ENCODE measurements at regions of chr1 and their contacts with region 1.

Region 1: DNA sequence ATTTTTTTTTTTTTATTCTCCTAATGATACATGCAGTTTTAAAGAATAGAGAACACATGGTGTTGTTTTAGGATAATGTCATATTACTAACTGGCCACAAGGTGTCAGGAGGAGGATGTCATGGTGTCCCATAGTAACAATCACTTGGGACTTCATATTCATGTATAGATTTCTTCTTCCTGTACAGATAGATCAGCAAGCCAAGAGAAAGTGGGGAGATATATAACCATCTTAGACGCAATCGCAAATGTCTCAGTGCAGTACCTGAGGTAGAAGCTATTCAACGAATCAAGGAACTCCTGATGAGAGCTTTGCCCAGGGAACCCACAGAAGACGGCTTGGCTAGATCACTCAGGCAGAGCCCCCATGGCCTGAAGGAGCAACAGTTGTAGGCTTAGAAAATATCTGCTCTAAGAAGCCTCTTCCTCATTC is 12.3 kb downstream of the OR2T11 start:
- DNase-seq: no peak
- H3K4me3 ChIP-seq: no peak overlapping the region
- H3K27ac ChIP-seq: no peak overlapping the region
- H3K4me1 ChIP-seq: no peaks in the 10 kb centered on the region
- H3K27me3 ChIP-seq: no peaks in the 10 kb centered on the region; the same call in 1 of the 2 replicates
- CTCF ChIP-seq: peak; percentile 70

Region 2: GRCh38 chr1:247448107-247448791 is 1174.3 kb before region 1 on chr1:
- CTCF ChIA-PET with region 1: no interaction called
- POLR2A ChIA-PET with region 1: no interaction called
- intact Hi-C with region 1: no loop called
- DNase-seq: peak in 1 of 2 experiments; percentile 47
- H3K4me3 ChIP-seq: peak overlapping the region; percentile 54; the same call in 1 of the 2 replicates
- H3K27ac ChIP-seq: no peak overlapping the region
- H3K4me1 ChIP-seq: no peaks in the 10 kb centered on the region
- H3K27me3 ChIP-seq: peaks cover 40% of the 10 kb centered on the region
- CTCF ChIP-seq: no peak

Region 3: DNA sequence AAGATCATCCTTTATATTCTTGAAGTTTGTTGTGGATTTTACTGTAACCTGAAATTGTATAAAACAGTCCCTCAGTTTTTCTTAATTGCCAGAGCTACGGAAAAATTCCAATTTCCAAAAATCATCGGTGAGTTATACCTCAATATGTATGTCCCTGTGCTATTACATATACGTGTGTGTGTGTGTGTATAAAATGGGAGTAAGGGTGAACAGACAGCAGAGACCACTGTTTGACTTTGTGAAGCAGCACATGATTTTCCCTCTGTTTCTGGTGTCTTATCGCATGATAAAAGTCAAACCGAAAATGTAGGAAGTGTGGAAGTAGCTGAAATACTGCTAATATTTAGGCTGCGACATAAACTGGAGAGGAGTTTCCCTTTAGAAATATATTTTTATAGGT is 218.6 kb before region 1 on chr1:
- CTCF ChIA-PET with region 1: no interaction called
- POLR2A ChIA-PET with region 1: no interaction called
- intact Hi-C with region 1: no loop called
- DNase-seq: no peak
- H3K4me3 ChIP-seq: no peak overlapping the region
- H3K27ac ChIP-seq: no peak overlapping the region
- H3K4me1 ChIP-seq: no peaks in the 10 kb centered on the region
- H3K27me3 ChIP-seq: no peaks in the 10 kb centered on the region
- CTCF ChIP-seq: no peak

Region 4: GRCh38 chr1:248596615-248597014 is 26.0 kb before region 1 on chr1:
- CTCF ChIA-PET with region 1: no interaction called
- POLR2A ChIA-PET with region 1: no interaction called
- intact Hi-C with region 1: loop called (anchors 1 kb)
- DNase-seq: no peak
- H3K4me3 ChIP-seq: no peak overlapping the region
- H3K27ac ChIP-seq: no peak overlapping the region
- H3K4me1 ChIP-seq: no peaks in the 10 kb centered on the region
- H3K27me3 ChIP-seq: no peaks in the 10 kb centered on the region
- CTCF ChIP-seq: no peak

Region 5: GRCh38 chr1:248811514-248812490 is 189.2 kb after region 1 on chr1:
- CTCF ChIA-PET with region 1: no interaction called
- POLR2A ChIA-PET with region 1: no interaction called
- intact Hi-C with region 1: loop called (anchors 2 kb)
- DNase-seq: no peak
- H3K4me3 ChIP-seq: no peak overlapping the region
- H3K27ac ChIP-seq: no peak overlapping the region
- H3K4me1 ChIP-seq: no peaks in the 10 kb centered on the region
- H3K27me3 ChIP-seq: no peaks in the 10 kb centered on the region
- CTCF ChIP-seq: no peak